Heart right ventricle (tissue), 16 donors: ENCODE measurements at regions of chr6 and their contacts with region 1.

Region 1: GRCh38 chr6:131627724-131628682 is at the start of gene MED23:
- DNase-seq: peak; percentile 94 to 95
- ATAC-seq: peak; percentile 97 to 99 (median 98)
- H3K4me3 ChIP-seq: peak within 1 kb of the TSS; percentile 61 to 92 (median 78)
- H3K27ac ChIP-seq: peak within 1 kb of the TSS in 9 of 10 donors; percentile 48 to 91 (median 71)
- H3K4me1 ChIP-seq: peaks cover 0 to 26% (median 16%) of the 10 kb centered on the region in 9 donors
- H3K27me3 ChIP-seq: no peaks in the 10 kb centered on the region
- CTCF ChIP-seq: peak; percentile 91 to 100 (median 97)
- total RNA-seq, gene MED23: 9.8 to 14.1 (median 11.5) TPM

Region 2: GRCh38 chr6:131182991-131183425 is 445.0 kb before region 1 on chr6:
- intact Hi-C with region 1: loop called in 1 of 10 experiments (anchors 10 kb)
- DNase-seq: no peak
- ATAC-seq: peak in 1 of 8 donors; percentile 27
- H3K4me3 ChIP-seq: no peak overlapping the region
- H3K27ac ChIP-seq: no peak overlapping the region
- H3K4me1 ChIP-seq: no peaks in the 10 kb centered on the region
- H3K27me3 ChIP-seq: no peaks in the 10 kb centered on the region
- CTCF ChIP-seq: peak in 7 of 9 donors; percentile 9 to 53 (median 39)

Region 3: DNA sequence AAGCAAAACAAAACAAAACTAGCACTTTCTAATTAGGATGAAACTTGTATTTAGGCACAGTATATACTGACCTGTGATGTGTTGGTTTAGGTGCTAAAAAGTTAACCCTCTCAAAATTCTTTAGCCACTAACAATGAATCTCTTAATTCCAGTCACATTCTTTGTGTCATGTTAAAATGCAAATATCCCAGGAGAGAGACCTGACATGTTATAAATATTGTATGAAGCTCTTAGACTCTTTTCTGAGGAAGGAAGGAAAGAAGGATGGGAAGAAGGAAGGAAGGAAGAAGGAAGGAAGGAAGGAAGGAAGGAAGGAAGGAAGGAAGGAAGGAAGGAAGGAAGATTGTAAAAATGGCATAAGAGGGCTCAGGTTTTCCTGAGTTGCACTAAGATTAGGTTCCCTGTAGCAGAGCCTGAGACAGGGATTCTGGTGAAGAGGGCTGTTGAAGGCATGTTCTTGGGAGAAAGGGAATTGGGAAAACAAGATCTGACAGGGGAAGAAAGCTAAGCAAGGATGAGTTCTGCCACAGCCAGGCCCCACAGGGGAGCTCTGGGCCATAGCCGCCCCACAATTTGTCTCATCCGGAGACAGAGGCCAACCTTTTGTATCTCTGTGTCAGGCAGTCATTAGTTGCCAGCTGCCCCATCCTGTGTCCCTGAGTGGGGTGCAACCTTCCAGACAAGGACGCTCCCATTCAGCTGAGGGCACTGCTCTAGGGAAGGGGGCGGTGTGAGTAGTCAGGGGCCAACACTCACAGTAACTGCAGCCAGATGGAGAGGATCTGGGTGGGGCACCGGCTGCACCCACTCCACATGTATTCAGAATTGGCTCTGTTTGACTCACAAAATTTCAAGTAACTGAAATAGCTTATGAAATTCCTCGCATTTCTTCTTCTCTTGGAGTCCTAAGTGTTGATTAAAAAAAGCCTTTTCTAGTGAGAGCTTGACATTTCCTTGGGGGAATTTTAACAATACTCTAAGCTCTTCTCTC is 244.3 kb before region 1 on chr6:
- intact Hi-C with region 1: no loop called
- DNase-seq: no peak
- ATAC-seq: peak in 1 of 8 donors; percentile 37
- H3K4me3 ChIP-seq: no peak overlapping the region
- H3K27ac ChIP-seq: no peak overlapping the region
- H3K4me1 ChIP-seq: no peaks in the 10 kb centered on the region
- H3K27me3 ChIP-seq: peaks cover 0 to 3% (median 0%) of the 10 kb centered on the region in 7 donors
- CTCF ChIP-seq: no peak

Region 4: GRCh38 chr6:131721161-131721560 is 93.2 kb after region 1 on chr6:
- intact Hi-C with region 1: no loop called
- DNase-seq: no peak
- ATAC-seq: no peak
- H3K4me3 ChIP-seq: no peak overlapping the region
- H3K27ac ChIP-seq: no peak overlapping the region
- H3K4me1 ChIP-seq: no peaks in the 10 kb centered on the region
- H3K27me3 ChIP-seq: no peaks in the 10 kb centered on the region
- CTCF ChIP-seq: no peak

Region 5: GRCh38 chr6:132247381-132248159 is 619.6 kb after region 1 on chr6:
- intact Hi-C with region 1: no loop called
- DNase-seq: no peak
- ATAC-seq: no peak
- H3K4me3 ChIP-seq: no peak overlapping the region
- H3K27ac ChIP-seq: no peak overlapping the region
- H3K4me1 ChIP-seq: no peaks in the 10 kb centered on the region
- H3K27me3 ChIP-seq: no peaks in the 10 kb centered on the region
- CTCF ChIP-seq: no peak